GM18951 (cell line): ENCODE measurements at regions of chr6 and their contacts with region 1.

Region 1: GRCh38 chr6:13538084-13538483 is 36.3 kb upstream of the SIRT5 start:
- POLR2A ChIP-seq: no peak

Region 2: GRCh38 chr6:13194852-13195251 is 343.2 kb before region 1 on chr6:
- in situ Hi-C with region 1: loop called (anchors 25 kb)
- POLR2A ChIP-seq: no peak